Activated B cell treated with CpG ODN at 0.5 μM for 24 hours (primary cell): ENCODE measurements at regions of chr9 and their contacts with region 1.

Region 1: DNA sequence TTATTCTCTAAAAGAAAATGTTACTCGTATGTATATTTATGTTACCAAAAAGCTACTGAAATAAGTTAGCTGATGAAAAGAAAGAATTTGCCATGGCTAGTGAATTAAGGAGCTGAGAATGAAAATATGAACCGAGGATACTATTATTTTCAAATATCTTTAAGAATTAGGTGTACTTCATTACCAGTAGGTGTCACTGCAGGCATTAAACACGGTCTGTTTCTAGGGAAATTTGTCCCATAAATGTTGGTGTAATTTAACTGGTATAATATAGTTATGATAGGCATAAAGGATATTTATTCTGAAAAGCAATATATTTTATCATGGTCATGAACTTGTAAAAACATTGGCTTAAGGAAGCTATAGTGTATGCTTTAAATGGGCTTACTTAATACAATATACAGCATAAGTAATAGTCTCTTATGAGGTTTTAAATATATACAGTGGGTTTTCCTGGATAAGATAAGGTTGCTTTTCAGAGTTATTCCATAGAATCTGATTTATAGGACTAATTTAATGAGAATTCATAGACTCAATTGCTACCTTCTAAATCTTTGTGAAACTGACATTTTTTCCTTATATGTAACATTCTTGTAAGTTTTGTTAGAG is 72.4 kb upstream of the MPDZ start:
- DNase-seq: no peak
- ATAC-seq: no peak
- H3K4me3 Mint-ChIP-seq: no peak overlapping the region
- H3K27ac Mint-ChIP-seq: no peak overlapping the region
- H3K4me1 Mint-ChIP-seq: no peaks in the 10 kb centered on the region
- H3K27me3 Mint-ChIP-seq: no peaks in the 10 kb centered on the region
- CTCF ChIP-seq: no peak

Region 2: GRCh38 chr9:12826924-12827565 is 524.8 kb before region 1 on chr9:
- CTCF ChIA-PET with region 1: no interaction called
- POLR2A ChIA-PET with region 1: no interaction called
- intact Hi-C with region 1: no loop called
- DNase-seq: no peak
- ATAC-seq: no peak
- H3K4me3 Mint-ChIP-seq: no peak overlapping the region
- H3K27ac Mint-ChIP-seq: no peak overlapping the region
- H3K4me1 Mint-ChIP-seq: no peaks in the 10 kb centered on the region
- H3K27me3 Mint-ChIP-seq: no peaks in the 10 kb centered on the region
- CTCF ChIP-seq: no peak

Region 3: DNA sequence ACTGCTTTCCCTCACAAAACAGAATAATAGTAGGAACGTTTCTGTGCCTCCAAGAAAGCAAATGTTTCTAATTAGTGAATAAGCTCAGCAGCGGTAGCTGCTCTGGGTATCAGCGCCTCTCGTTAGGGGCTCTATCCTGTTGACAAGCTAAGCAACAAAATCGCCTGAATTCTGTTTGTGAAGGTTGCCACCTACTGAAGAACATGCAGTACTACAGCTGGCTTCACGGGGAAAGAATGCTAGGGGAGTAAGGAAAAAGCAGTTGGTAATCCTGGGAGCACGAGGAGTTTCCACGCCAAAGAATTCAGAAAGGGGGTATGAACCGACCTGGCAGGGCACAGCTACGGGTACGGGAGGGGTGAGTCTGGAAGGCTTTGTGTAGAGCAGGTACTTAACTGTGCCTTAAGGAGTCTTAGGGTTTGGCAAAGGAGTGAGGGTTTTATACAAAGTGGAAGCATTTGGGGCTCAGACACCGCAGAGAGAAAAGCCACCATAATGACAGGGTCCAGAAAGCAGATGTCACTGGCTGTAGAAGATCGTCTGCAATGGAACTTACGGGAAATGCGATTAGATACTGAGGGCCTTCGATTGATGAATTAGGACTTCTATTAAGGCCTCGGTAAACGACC is 1783.4 kb after region 1 on chr9:
- CTCF ChIA-PET with region 1: interaction called, 3 read pairs
- POLR2A ChIA-PET with region 1: no interaction called
- intact Hi-C with region 1: loop called (anchors 10 kb)
- DNase-seq: no peak
- ATAC-seq: peak; percentile 65
- H3K4me3 Mint-ChIP-seq: no peak overlapping the region
- H3K27ac Mint-ChIP-seq: no peak overlapping the region
- H3K4me1 Mint-ChIP-seq: peaks cover 3% of the 10 kb centered on the region
- H3K27me3 Mint-ChIP-seq: peaks cover 4% of the 10 kb centered on the region
- CTCF ChIP-seq: no peak